Breast epithelium (tissue), 4 donors: ENCODE measurements at regions of chr6 and their contacts with region 1.

Region 1: GRCh38 chr6:134822920-134823709 is 126.8 kb downstream of the ALDH8A1 start:
- DNase-seq: no peak
- H3K4me3 ChIP-seq: no peak overlapping the region
- H3K27ac ChIP-seq: peak overlapping the region in 1 of 2 donors; percentile 44
- H3K4me1 ChIP-seq: peaks cover 0 to 7% of the 10 kb centered on the region in 2 donors
- H3K27me3 ChIP-seq: no peaks in the 10 kb centered on the region
- CTCF ChIP-seq: peak; percentile 72 to 94 (median 86)
- POLR2A ChIP-seq: no peak

Region 2: GRCh38 chr6:134035823-134036296 is 787.3 kb before region 1 on chr6:
- intact Hi-C with region 1: no loop called
- DNase-seq: peak in 1 of 2 donors; percentile 58
- H3K4me3 ChIP-seq: no peak overlapping the region
- H3K27ac ChIP-seq: peak overlapping the region; percentile 64 to 75
- H3K4me1 ChIP-seq: peaks cover 0 to 3% of the 10 kb centered on the region in 2 donors
- H3K27me3 ChIP-seq: no peaks in the 10 kb centered on the region
- CTCF ChIP-seq: no peak
- POLR2A ChIP-seq: no peak

Region 3: GRCh38 chr6:134174672-134175198 is 648.4 kb before region 1 on chr6:
- intact Hi-C with region 1: loop called (anchors 10 kb)
- DNase-seq: peak; percentile 80 to 85
- H3K4me3 ChIP-seq: peak overlapping the region; percentile 78 to 93 (median 87)
- H3K27ac ChIP-seq: peak overlapping the region; percentile 95 to 96
- H3K4me1 ChIP-seq: peaks cover 5 to 6% of the 10 kb centered on the region in 2 donors
- H3K27me3 ChIP-seq: no peaks in the 10 kb centered on the region
- CTCF ChIP-seq: no peak
- POLR2A ChIP-seq: peak; percentile 81